Sciatic nerve (tissue), 2 donors: ENCODE measurements at regions of chr13 and their contacts with region 1.

Region 1: GRCh38 chr13:29850224-29850898 is at the start of gene UBL3:
- DNase-seq: peak; percentile 98
- ATAC-seq: peak; percentile 97
- total RNA-seq, gene UBL3: 39.6 TPM

Region 2: DNA sequence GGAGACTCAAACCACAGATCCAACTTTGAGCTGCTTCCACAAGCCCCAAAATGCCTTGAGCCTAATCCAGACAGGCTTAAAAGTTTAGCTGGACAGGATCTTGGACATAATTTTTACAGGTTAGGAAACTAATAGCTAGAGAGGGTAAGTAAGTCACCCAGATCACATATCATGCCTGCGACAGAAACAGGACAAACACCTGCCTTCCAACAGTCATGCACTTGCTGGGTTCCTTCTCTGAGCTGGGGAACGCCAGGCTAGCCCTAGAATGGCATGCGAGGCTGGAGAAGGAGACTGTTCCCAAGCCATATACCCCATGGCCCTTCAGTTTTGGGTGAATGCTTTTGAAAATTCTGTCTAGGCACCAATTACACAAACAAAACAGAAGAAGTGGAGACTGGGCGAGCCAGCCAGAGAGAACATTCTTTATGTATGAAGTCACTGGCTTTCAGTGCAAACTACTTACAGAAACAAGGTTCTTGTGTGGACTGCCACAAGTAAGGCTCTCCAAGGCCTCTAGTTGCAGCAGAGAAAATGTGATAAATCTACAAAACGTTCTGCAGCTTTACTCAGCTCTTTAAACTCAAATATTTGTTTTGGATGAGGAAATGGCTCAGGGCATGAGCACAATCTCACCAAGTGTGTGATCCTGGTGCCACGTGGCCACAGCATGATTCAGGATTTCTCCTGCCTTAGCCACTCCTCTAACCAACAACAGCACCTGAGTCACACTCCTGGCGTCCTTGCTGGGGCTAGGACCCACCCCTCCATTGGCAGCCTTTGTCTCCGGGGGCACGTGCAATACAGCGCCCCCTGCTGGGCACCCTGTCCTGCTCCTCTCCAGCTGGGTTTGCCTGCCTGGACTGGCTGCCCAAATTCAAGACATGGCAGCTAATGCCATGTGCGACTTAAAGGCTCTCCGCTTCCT is 73.5 kb after region 1 on chr13:
- intact Hi-C with region 1: loop called (anchors 10 kb)
- DNase-seq: peak; percentile 83
- ATAC-seq: peak; percentile 93

Region 3: GRCh38 chr13:30114571-30115256 is 264.4 kb after region 1 on chr13:
- intact Hi-C with region 1: loop called (anchors 10 kb)
- DNase-seq: peak; percentile 95
- ATAC-seq: peak; percentile 70

Region 4: GRCh38 chr13:30486230-30487074 is 636.1 kb after region 1 on chr13:
- intact Hi-C with region 1: no loop called
- DNase-seq: no peak
- ATAC-seq: no peak